Lower leg skin (tissue), 4 donors: ENCODE measurements at regions of chr10 and their contacts with region 1.

Region 1: DNA sequence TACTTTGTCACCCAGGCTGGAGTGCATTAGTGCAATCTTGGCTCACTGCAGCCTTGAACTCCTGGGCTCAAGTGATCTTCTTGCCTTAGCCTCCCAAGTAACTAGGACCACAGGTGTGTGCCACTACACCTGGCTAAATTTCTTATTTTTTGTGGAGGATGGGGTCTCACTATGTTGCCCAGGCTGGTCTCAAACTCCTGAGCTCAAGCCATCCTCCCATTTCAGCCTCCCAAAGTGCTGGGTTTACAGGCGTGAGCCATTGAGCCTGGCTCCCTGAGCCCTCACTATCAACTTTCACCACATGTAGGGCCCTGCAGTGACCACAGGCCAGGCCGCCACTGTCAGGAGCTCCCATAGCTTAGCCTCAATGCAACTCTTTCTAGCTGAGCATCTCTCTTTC is 110.2 kb downstream of the CUL2 start:
- DNase-seq: no peak
- H3K4me3 ChIP-seq: no peak overlapping the region
- CTCF ChIP-seq: no peak
- POLR2A ChIP-seq: no peak

Region 2: GRCh38 chr10:34479520-34480179 is 500.3 kb before region 1 on chr10:
- intact Hi-C with region 1: no loop called
- DNase-seq: no peak
- H3K4me3 ChIP-seq: no peak overlapping the region
- CTCF ChIP-seq: no peak
- POLR2A ChIP-seq: no peak

Region 3: GRCh38 chr10:34666008-34666705 is 313.8 kb before region 1 on chr10:
- intact Hi-C with region 1: loop called (anchors 10 kb)
- DNase-seq: peak in 1 of 2 donors; percentile 37
- H3K4me3 ChIP-seq: no peak overlapping the region
- CTCF ChIP-seq: no peak
- POLR2A ChIP-seq: no peak

Region 4: DNA sequence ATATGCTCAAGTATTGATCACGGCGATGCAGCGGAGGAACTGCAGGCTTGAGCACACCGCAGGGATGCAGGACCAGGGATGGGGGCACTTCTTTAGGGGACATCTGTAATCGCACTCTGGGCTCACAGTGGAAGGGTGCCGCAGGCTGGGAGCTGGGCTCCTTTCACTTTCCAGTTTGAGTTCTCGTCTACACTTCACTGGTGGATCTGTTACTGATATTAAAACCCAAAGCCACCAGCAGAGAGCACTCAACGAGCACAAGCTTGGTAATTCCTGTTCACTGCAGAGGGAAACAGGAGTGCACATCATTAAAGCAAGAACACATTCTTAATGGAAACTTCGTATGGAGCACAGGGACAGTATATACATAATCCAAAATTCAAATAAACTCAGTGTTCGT is 256.2 kb before region 1 on chr10:
- intact Hi-C with region 1: loop called (anchors 10 kb)
- DNase-seq: peak; percentile 56 to 83
- H3K4me3 ChIP-seq: no peak overlapping the region
- CTCF ChIP-seq: no peak
- POLR2A ChIP-seq: no peak